ENCODE measurements at regions of chr6 and their contacts with region 1.

Region 1: GRCh38 chr6:10510592-10511367 is 10.4 kb upstream of the GCNT2 start:
- DNase-seq: peak; percentile 76 to 81
- ATAC-seq: peak; percentile 87
- H3K4me3 ChIP-seq: peak overlapping the region in 1 of 2 donors; percentile 26
- H3K27ac ChIP-seq: peak overlapping the region; percentile 68 to 82
- H3K4me1 ChIP-seq: peaks cover 0 to 2% of the 10 kb centered on the region in 2 donors
- H3K27me3 ChIP-seq: no peaks in the 10 kb centered on the region

Region 2: GRCh38 chr6:10621213-10621612 is 110.4 kb after region 1 on chr6:
- intact Hi-C with region 1: loop called in 1 of 2 experiments (anchors 5 kb)
- DNase-seq: no peak
- ATAC-seq: no peak
- H3K4me3 ChIP-seq: no peak overlapping the region
- H3K27ac ChIP-seq: no peak overlapping the region
- H3K4me1 ChIP-seq: no peaks in the 10 kb centered on the region
- H3K27me3 ChIP-seq: no peaks in the 10 kb centered on the region